HCT116 (cell line): ENCODE measurements at regions of chr5 and their contacts with region 1.

Region 1: GRCh38 chr5:94968507-94969095 is 316.3 kb downstream of the MCTP1 start:
- DNase-seq: peak; percentile 69
- ATAC-seq: peak; percentile 83
- H3K4me3 ChIP-seq: no peak overlapping the region
- H3K27ac ChIP-seq: no peak overlapping the region
- H3K4me1 ChIP-seq: no peaks in the 10 kb centered on the region; a peak in 1 of 4 replicates
- H3K27me3 ChIP-seq: no peaks in the 10 kb centered on the region
- CTCF ChIP-seq: peak; percentile 64 to 75 (median 73); a peak in 5 of 6 replicates
- POLR2A ChIP-seq: no peak
- RAD21 ChIP-seq: peak; percentile 79

Region 2: GRCh38 chr5:95238560-95239325 is 270.1 kb after region 1 on chr5:
- CTCF ChIA-PET with region 1: interaction called, 6 read pairs
- POLR2A ChIA-PET with region 1: no interaction called
- RAD21 ChIA-PET with region 1: no interaction called
- intact Hi-C with region 1: loop called (anchors 1 kb)
- DNase-seq: no peak
- ATAC-seq: no peak
- H3K4me3 ChIP-seq: no peak overlapping the region
- H3K27ac ChIP-seq: no peak overlapping the region
- H3K4me1 ChIP-seq: no peaks in the 10 kb centered on the region
- H3K27me3 ChIP-seq: no peaks in the 10 kb centered on the region; the same call in 1 of the 2 replicates
- CTCF ChIP-seq: peak in 2 of 3 experiments; percentile 19 to 47; a peak in 1 of 6 replicates
- POLR2A ChIP-seq: no peak
- RAD21 ChIP-seq: peak; percentile 55